Activated CD4-positive, alpha-beta T cell treated with anti-CD3 and anti-CD28 coated beads, Interleukin-2, amount 10 ng/mL, durations not matched to agents 24 days and 14 days (primary cell): ENCODE measurements at regions of chr2 and their contacts with region 1.

Region 1: GRCh38 chr2:24577481-24577880 is 86.4 kb downstream of the NCOA1 start:
- DNase-seq: peak; percentile 64
- H3K4me3 Mint-ChIP-seq: peak overlapping the region; percentile 34
- H3K27ac Mint-ChIP-seq: peak overlapping the region; percentile 49
- H3K4me1 Mint-ChIP-seq: peaks cover 66% of the 10 kb centered on the region
- H3K27me3 Mint-ChIP-seq: no peaks in the 10 kb centered on the region

Region 2: DNA sequence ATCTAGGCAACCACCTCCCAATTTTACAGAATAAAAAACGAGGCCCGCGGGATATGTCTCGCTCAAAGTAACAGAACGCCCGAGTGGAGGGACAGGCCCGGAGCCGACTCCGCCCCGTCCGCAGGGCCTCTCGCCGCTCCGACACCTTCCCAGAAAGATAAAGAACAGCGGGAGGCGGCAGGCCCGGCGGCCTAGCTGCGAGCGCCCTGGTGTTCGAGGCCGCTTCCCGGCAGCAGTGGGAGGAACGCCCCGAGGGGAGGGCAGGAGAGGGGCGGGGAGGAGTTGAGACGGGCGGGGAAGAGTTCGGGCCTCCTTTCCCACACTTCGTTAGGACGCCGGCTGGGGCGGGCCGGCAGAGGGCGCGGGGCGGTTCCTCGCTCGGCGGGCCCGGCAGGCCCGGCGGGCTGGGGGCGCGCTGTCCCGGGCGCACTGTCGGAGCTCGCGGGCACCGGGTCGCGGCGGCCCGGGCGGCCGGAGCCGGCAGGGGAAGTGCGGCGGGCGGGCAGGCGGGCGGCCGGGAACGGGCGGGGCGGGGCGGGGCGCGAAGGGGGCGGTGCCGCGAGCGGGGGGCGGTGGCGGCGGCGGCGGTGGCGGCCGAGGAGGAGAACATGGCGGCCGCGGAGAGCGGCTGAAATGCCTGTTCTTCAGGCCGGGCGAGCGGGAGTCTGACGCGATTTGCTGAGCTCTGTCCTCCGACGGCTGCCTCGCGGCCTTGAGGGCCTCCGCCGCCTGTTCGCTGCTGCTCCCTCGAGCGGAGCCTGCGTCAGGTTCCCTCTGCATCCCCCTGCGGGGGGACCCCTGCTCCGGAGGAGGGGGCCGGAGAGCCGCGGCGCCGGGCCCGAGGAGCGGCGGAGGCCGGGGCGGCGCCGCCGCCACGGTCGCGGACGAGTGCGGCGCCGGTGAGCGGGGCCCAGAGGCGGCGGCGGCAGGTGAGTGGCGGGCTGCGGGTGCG is 86.5 kb before region 1 on chr2 and contains the start of gene NCOA1:
- intact Hi-C with region 1: loop called (anchors 2 kb)
- DNase-seq: peak; percentile 97
- H3K4me3 Mint-ChIP-seq: peak within 1 kb of the TSS; percentile 96
- H3K27ac Mint-ChIP-seq: peak within 1 kb of the TSS; percentile 92
- H3K4me1 Mint-ChIP-seq: peaks cover 40% of the 10 kb centered on the region
- H3K27me3 Mint-ChIP-seq: peaks cover 2% of the 10 kb centered on the region
- total RNA-seq, gene NCOA1: 24.6 and 25.9 TPM in 2 replicates

Region 3: GRCh38 chr2:24521975-24522639 is 55.4 kb before region 1 on chr2:
- intact Hi-C with region 1: loop called (anchors 1 kb)
- DNase-seq: no peak
- H3K4me3 Mint-ChIP-seq: peak overlapping the region; percentile 74
- H3K27ac Mint-ChIP-seq: peak overlapping the region; percentile 87
- H3K4me1 Mint-ChIP-seq: peaks cover 30% of the 10 kb centered on the region
- H3K27me3 Mint-ChIP-seq: no peaks in the 10 kb centered on the region

Region 4: DNA sequence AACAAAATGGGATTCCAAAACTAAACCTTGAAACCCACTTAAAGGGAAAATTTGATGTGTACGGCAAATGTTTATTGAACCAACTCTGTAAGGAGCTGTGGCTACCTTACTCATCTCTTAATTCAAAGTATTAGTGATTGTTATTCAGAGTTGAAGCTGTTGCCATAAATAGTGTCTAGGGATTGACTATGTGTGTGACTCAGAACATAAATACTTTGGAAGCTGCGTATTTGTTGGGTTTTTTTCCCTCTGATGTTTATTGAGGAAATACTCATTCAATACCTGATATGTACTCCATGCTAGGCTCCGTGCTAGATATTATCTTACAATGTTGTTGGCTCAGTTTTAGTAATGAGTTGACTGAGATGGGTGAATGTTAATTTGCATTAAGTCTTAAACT is 125.3 kb after region 1 on chr2:
- intact Hi-C with region 1: loop called (anchors 5 kb)
- DNase-seq: no peak
- H3K4me3 Mint-ChIP-seq: no peak overlapping the region
- H3K27ac Mint-ChIP-seq: peak overlapping the region; percentile 4
- H3K4me1 Mint-ChIP-seq: peaks cover 3% of the 10 kb centered on the region
- H3K27me3 Mint-ChIP-seq: no peaks in the 10 kb centered on the region

Region 5: GRCh38 chr2:24792874-24793760 is 215.6 kb after region 1 on chr2 and contains the starts of genes CENPO and PTRHD1:
- intact Hi-C with region 1: loop called (anchors 5 kb)
- DNase-seq: peak; percentile 98
- H3K4me3 Mint-ChIP-seq: peak within 1 kb of the TSS; percentile 98
- H3K27ac Mint-ChIP-seq: peak within 1 kb of the TSS; percentile 99
- H3K4me1 Mint-ChIP-seq: peaks cover 37% of the 10 kb centered on the region
- H3K27me3 Mint-ChIP-seq: peaks cover 2% of the 10 kb centered on the region
- total RNA-seq, gene CENPO: 44.0 and 45.9 TPM in 2 replicates
- total RNA-seq, gene PTRHD1: 21.7 and 22.2 TPM in 2 replicates

Region 6: DNA sequence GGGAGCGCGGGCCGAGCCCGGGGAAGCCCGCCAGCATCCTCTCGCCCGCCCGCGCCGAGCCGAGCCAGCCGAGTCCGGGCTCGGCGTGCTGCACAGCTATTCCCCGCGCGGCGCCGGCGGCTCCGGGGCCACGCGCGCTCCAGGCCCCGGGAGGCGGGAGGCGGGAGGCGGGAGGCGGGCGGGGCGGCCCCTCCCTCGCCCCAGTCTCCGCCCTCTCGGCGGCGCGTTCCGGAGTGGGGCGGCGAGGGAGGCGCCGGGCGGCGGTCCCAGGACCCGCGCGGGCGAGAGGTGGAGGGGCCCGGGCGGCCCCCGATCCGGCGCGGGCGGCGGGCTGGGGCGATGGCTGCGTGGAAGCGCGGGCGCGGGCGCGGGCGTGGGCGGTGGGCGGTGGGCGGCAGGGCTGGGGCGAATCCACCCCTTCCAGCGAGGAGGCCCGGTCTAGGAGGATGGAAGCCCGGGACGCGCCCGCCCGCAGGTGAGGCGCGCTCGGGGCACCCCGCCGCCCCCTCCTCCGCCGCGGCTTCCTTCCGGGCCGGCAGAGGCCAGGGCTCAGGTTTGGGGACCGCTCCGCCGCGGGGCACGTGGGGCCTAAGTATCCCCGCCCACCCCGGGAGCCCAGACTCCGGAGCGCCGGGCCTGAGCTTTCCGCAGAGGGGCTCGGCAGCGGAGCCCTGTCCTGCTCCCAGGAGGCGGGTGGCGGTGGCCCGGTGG is 342.8 kb after region 1 on chr2 and contains the start of gene ADCY3:
- intact Hi-C with region 1: loop called (anchors 5 kb)
- DNase-seq: peak; percentile 90
- H3K4me3 Mint-ChIP-seq: peak within 1 kb of the TSS; percentile 90
- H3K27ac Mint-ChIP-seq: peak within 1 kb of the TSS; percentile 69
- H3K4me1 Mint-ChIP-seq: peaks cover 29% of the 10 kb centered on the region
- H3K27me3 Mint-ChIP-seq: peaks cover 6% of the 10 kb centered on the region
- total RNA-seq, gene ADCY3: 103 and 108 TPM in 2 replicates